ENCODE measurements at regions of chr5 and their contacts with region 1.

Region 1: DNA sequence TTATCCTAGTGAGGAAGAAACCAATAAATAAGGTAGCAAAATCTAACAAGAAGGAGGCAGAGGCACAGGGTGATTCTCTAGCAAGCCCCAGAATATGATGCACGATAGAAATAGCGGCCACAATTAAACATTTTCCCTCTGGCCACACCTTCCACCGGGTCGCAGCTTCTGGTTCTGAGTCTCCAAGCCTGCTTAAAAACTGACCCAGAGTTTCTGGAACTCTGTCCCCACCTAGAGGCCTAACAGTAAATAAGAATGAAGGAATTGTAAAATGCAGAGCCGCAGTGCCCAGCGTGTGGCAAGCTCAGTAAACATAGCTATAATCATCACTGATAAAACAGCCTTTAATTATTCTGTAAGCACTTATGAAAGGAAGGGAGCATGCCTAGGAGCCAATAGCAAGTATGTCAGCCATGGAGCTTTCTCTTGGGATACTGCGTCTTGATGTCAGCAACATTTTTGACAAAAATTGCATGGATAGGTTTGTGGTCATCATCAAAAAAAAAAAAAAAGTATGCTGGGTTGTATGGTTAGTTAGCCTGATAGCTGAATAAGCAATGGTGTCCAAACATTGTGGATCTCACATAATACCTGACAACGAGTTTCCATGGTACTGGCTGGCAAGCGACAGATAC is 465.5 kb downstream of the DNAH5 start:
- DNase-seq: peak; percentile 65
- H3K4me3 ChIP-seq: no peak overlapping the region
- H3K27ac ChIP-seq: no peak overlapping the region
- H3K4me1 ChIP-seq: peaks cover 23% of the 10 kb centered on the region
- H3K27me3 ChIP-seq: no peaks in the 10 kb centered on the region
- CTCF ChIP-seq: peak; percentile 72 to 76

Region 2: GRCh38 chr5:12292610-12293204 is 1186.2 kb before region 1 on chr5:
- CTCF ChIA-PET with region 1: no interaction called
- dilution Hi-C with region 1: no loop called
- in situ Hi-C with region 1: loop called in 1 of 2 experiments (anchors 25 kb)
- intact Hi-C with region 1: loop called (anchors 2 kb)
- DNase-seq: peak; percentile 6
- H3K4me3 ChIP-seq: no peak overlapping the region
- H3K27ac ChIP-seq: no peak overlapping the region
- H3K4me1 ChIP-seq: no peaks in the 10 kb centered on the region
- H3K27me3 ChIP-seq: no peaks in the 10 kb centered on the region
- CTCF ChIP-seq: peak; percentile 49 to 58

Region 3: GRCh38 chr5:12901696-12902095 is 577.3 kb before region 1 on chr5:
- CTCF ChIA-PET with region 1: no interaction called
- dilution Hi-C with region 1: no loop called
- in situ Hi-C with region 1: no loop called
- intact Hi-C with region 1: loop called (anchors 2 kb)
- DNase-seq: peak; percentile 28
- H3K4me3 ChIP-seq: no peak overlapping the region
- H3K27ac ChIP-seq: no peak overlapping the region
- H3K4me1 ChIP-seq: peaks cover 7% of the 10 kb centered on the region
- H3K27me3 ChIP-seq: no peaks in the 10 kb centered on the region
- CTCF ChIP-seq: no peak

Region 4: DNA sequence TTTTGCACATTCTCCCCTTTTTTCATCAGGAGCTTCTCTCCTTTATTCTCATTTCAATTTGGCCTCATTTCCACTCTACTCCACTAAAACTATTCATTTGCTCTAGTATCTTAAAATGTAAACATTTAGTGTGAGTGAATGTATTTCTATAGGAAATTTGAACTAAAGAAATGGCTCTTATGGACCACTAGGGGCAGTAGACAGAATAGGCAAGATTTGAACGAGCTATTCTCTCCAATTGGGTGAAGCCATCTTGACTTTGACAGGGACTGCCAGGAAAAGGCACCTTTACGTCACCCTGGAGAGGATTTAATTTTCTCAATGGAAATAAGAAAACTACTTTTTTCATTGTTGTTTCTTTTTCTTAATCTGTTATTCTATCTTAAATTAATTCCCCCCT is 200.8 kb before region 1 on chr5:
- CTCF ChIA-PET with region 1: no interaction called
- dilution Hi-C with region 1: loop called (anchors 25 kb)
- in situ Hi-C with region 1: no loop called
- intact Hi-C with region 1: loop called (anchors 5 kb)
- DNase-seq: no peak
- H3K4me3 ChIP-seq: no peak overlapping the region
- H3K27ac ChIP-seq: no peak overlapping the region
- H3K4me1 ChIP-seq: no peaks in the 10 kb centered on the region
- H3K27me3 ChIP-seq: peaks cover 2% of the 10 kb centered on the region
- CTCF ChIP-seq: peak; percentile 41 to 46

Region 5: DNA sequence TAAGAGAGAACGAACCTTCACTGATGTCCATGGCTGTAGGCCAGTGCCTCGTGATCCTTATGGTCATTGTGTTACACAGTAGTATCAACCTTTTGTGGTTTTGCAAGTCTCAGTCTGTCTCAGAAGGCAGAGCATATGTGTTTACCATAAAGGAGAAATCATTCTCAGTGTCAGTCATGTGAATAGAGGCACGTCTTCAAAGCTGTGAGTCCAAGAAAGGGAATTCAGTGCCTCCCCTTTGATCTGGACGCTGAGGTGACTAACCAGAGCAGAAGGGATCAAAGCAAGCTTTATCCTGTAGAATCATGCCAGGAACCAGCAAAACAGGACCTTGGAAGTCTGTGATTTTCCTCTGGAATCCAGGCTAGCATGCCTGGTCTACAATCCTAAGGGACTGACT is 31.7 kb after region 1 on chr5:
- CTCF ChIA-PET with region 1: no interaction called
- dilution Hi-C with region 1: no loop called
- in situ Hi-C with region 1: no loop called
- intact Hi-C with region 1: no loop called
- DNase-seq: peak; percentile 96
- H3K4me3 ChIP-seq: no peak overlapping the region
- H3K27ac ChIP-seq: peak overlapping the region; percentile 81
- H3K4me1 ChIP-seq: peaks cover 37% of the 10 kb centered on the region
- H3K27me3 ChIP-seq: no peaks in the 10 kb centered on the region
- CTCF ChIP-seq: no peak

Region 6: DNA sequence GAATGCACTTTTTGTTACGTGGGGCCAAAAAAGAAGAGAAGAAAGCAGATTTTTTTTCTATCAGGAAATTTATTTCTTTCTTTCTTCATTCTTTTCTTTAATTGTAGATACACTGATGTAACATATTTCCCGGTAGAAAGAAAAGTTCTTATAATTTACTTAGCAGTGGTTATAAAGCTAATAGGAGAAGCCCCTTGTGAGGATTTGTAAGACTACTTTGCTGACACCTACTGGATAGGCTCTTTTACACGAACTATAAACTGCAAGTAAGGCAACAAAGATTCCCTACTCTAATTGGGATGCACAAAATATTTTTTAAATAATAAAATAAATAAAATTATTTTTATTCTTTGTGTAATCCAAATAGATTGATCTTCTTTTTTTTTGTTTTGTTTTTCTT is 181.1 kb after region 1 on chr5:
- CTCF ChIA-PET with region 1: interaction called, 5 read pairs
- dilution Hi-C with region 1: no loop called
- in situ Hi-C with region 1: no loop called
- intact Hi-C with region 1: loop called (anchors 2 kb)
- DNase-seq: no peak
- H3K4me3 ChIP-seq: no peak overlapping the region
- H3K27ac ChIP-seq: no peak overlapping the region
- H3K4me1 ChIP-seq: peaks cover 56% of the 10 kb centered on the region
- H3K27me3 ChIP-seq: no peaks in the 10 kb centered on the region
- CTCF ChIP-seq: peak; percentile 28 to 49

Region 7: GRCh38 chr5:13946115-13946514 is 467.2 kb after region 1 on chr5:
- CTCF ChIA-PET with region 1: no interaction called
- dilution Hi-C with region 1: no loop called
- in situ Hi-C with region 1: loop called in 1 of 2 experiments (anchors 25 kb)
- intact Hi-C with region 1: no loop called
- DNase-seq: peak; percentile 63
- H3K4me3 ChIP-seq: no peak overlapping the region
- H3K27ac ChIP-seq: peak overlapping the region; percentile 33
- H3K4me1 ChIP-seq: peaks cover 23% of the 10 kb centered on the region
- H3K27me3 ChIP-seq: no peaks in the 10 kb centered on the region
- CTCF ChIP-seq: no peak